Activated CD8-positive, alpha-beta T cell treated with anti-CD3 and anti-CD28 coated beads, Interleukin-2, amount 10 ng/mL, durations not matched to agents 7 days and 5 days (primary cell): ENCODE measurements at regions of chr20 and their contacts with region 1.

Region 1: DNA sequence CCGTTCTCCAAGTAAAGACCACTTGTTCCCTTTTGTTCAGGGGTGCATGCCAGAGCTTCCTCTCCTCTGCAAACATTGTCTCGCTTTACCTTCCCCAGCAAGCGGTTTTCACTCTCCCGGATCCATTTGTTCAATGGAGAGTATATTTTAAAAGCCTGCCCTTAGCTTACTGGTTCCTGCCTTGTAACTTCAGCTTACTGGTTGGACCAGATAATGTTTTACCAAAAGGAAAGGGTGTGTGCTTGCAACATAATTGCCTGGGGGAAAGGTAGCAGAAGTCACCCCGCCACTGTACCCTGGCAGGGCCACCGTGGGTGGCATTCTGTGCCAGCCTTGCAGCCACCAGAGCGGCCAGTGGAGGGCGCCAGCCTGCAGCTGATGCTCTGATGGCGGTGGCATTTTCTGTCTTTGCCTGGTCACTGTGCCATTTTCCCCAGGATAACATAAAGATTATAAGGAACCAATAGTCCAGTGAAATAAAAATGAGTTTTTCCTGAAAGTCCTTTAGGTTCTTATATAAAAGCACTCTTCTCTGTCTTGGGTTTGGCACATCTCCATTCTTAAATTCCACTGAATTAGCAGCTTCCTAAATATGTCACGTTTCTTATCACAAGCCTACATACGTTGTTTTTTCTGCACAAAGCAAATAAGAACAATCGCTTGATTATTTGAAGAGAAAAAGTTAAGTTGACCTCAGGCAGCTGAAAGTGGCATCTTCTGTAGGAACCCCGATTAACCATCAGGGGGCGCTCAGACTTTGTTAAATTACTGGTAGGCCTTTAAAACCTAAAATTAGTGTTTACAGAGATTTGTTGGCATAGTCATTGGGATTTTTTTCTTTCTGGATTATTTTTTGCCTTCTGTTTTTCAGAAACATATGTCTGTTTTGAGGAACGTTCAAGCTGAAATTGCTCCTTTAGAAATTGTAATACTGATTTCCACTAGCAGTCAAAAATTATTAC is 67.4 kb upstream of the XRN2 start:
- DNase-seq: peak; percentile 78
- ATAC-seq: peak; percentile 80
- H3K4me3 Mint-ChIP-seq: no peak overlapping the region
- H3K27ac Mint-ChIP-seq: no peak overlapping the region
- H3K4me1 Mint-ChIP-seq: peaks cover 5% of the 10 kb centered on the region
- H3K27me3 Mint-ChIP-seq: no peaks in the 10 kb centered on the region

Region 2: GRCh38 chr20:20837574-20838021 is 398.2 kb before region 1 on chr20:
- CTCF ChIA-PET with region 1: interaction called, 20 read pairs
- POLR2A ChIA-PET with region 1: no interaction called
- DNase-seq: peak; percentile 58
- ATAC-seq: no peak
- H3K4me3 Mint-ChIP-seq: no peak overlapping the region
- H3K27ac Mint-ChIP-seq: no peak overlapping the region
- H3K4me1 Mint-ChIP-seq: no peaks in the 10 kb centered on the region
- H3K27me3 Mint-ChIP-seq: no peaks in the 10 kb centered on the region

Region 3: GRCh38 chr20:21027569-21027968 is 208.2 kb before region 1 on chr20:
- CTCF ChIA-PET with region 1: no interaction called
- POLR2A ChIA-PET with region 1: no interaction called
- DNase-seq: no peak
- ATAC-seq: no peak
- H3K4me3 Mint-ChIP-seq: no peak overlapping the region
- H3K27ac Mint-ChIP-seq: no peak overlapping the region
- H3K4me1 Mint-ChIP-seq: no peaks in the 10 kb centered on the region
- H3K27me3 Mint-ChIP-seq: peaks cover 13% of the 10 kb centered on the region

Region 4: GRCh38 chr20:21109144-21109543 is 126.6 kb before region 1 on chr20:
- CTCF ChIA-PET with region 1: no interaction called
- POLR2A ChIA-PET with region 1: no interaction called
- DNase-seq: no peak
- ATAC-seq: no peak
- H3K4me3 Mint-ChIP-seq: no peak overlapping the region
- H3K27ac Mint-ChIP-seq: no peak overlapping the region
- H3K4me1 Mint-ChIP-seq: peaks cover 14% of the 10 kb centered on the region
- H3K27me3 Mint-ChIP-seq: peaks cover 68% of the 10 kb centered on the region

Region 5: GRCh38 chr20:21189761-21190523 is 45.8 kb before region 1 on chr20:
- CTCF ChIA-PET with region 1: interaction called, 12 read pairs
- POLR2A ChIA-PET with region 1: no interaction called
- DNase-seq: no peak
- ATAC-seq: no peak
- H3K4me3 Mint-ChIP-seq: no peak overlapping the region
- H3K27ac Mint-ChIP-seq: no peak overlapping the region
- H3K4me1 Mint-ChIP-seq: peaks cover 11% of the 10 kb centered on the region
- H3K27me3 Mint-ChIP-seq: no peaks in the 10 kb centered on the region

Region 6: GRCh38 chr20:21225215-21225947 is 10.4 kb before region 1 on chr20:
- CTCF ChIA-PET with region 1: interaction called, 25 read pairs
- POLR2A ChIA-PET with region 1: no interaction called
- DNase-seq: no peak
- ATAC-seq: no peak
- H3K4me3 Mint-ChIP-seq: no peak overlapping the region
- H3K27ac Mint-ChIP-seq: no peak overlapping the region
- H3K4me1 Mint-ChIP-seq: no peaks in the 10 kb centered on the region
- H3K27me3 Mint-ChIP-seq: no peaks in the 10 kb centered on the region

Region 7: GRCh38 chr20:21257192-21257591 is 21.4 kb after region 1 on chr20:
- CTCF ChIA-PET with region 1: no interaction called
- POLR2A ChIA-PET with region 1: no interaction called
- DNase-seq: no peak
- ATAC-seq: no peak
- H3K4me3 Mint-ChIP-seq: no peak overlapping the region
- H3K27ac Mint-ChIP-seq: no peak overlapping the region
- H3K4me1 Mint-ChIP-seq: no peaks in the 10 kb centered on the region
- H3K27me3 Mint-ChIP-seq: no peaks in the 10 kb centered on the region

Region 8: GRCh38 chr20:21395666-21396598 is 160.2 kb after region 1 on chr20:
- CTCF ChIA-PET with region 1: interaction called, 15 read pairs
- POLR2A ChIA-PET with region 1: no interaction called
- DNase-seq: peak; percentile 68
- ATAC-seq: peak; percentile 80
- H3K4me3 Mint-ChIP-seq: peak overlapping the region; percentile 54
- H3K27ac Mint-ChIP-seq: peak overlapping the region; percentile 32
- H3K4me1 Mint-ChIP-seq: peaks cover 31% of the 10 kb centered on the region
- H3K27me3 Mint-ChIP-seq: peaks cover 63% of the 10 kb centered on the region

Region 9: GRCh38 chr20:21496452-21496851 is 260.7 kb after region 1 on chr20:
- CTCF ChIA-PET with region 1: interaction called, 205 read pairs
- POLR2A ChIA-PET with region 1: no interaction called
- DNase-seq: no peak
- ATAC-seq: no peak
- H3K4me3 Mint-ChIP-seq: no peak overlapping the region
- H3K27ac Mint-ChIP-seq: no peak overlapping the region
- H3K4me1 Mint-ChIP-seq: no peaks in the 10 kb centered on the region
- H3K27me3 Mint-ChIP-seq: peaks cover 21% of the 10 kb centered on the region

Region 10: GRCh38 chr20:21571841-21572690 is 336.3 kb after region 1 on chr20:
- CTCF ChIA-PET with region 1: interaction called, 10 read pairs
- POLR2A ChIA-PET with region 1: no interaction called
- DNase-seq: peak; percentile 27
- ATAC-seq: no peak
- H3K4me3 Mint-ChIP-seq: no peak overlapping the region
- H3K27ac Mint-ChIP-seq: no peak overlapping the region
- H3K4me1 Mint-ChIP-seq: peaks cover 6% of the 10 kb centered on the region
- H3K27me3 Mint-ChIP-seq: peaks cover 14% of the 10 kb centered on the region